Calu3 (cell line): ENCODE measurements at regions of chr1 and their contacts with region 1.

Region 1: DNA sequence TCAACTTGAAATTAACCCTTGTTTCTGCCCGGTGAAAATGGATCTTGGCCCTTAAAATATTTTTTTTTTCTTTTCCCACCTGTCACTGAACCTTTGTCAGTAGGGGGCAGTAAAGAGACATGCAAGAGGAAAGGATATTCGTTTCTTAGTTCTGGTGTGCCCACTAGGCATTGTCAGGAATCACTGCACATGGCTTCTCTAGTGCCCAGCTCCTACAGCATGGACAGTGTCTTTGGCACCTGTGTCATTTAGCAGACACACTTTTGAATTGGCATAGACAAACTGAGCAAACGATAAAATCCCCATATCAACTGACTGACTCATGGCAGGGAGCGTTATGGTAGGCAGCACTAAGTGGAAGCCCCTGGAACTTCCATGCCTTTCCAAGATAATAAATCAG is 1048.1 kb downstream of the BRINP3 start:
- DNase-seq: peak; percentile 54
- H3K4me3 Mint-ChIP-seq: no peak overlapping the region
- H3K27ac Mint-ChIP-seq: no peak overlapping the region
- H3K4me1 Mint-ChIP-seq: peaks cover 13% of the 10 kb centered on the region
- H3K27me3 Mint-ChIP-seq: no peaks in the 10 kb centered on the region
- CTCF ChIP-seq: peak; percentile 86

Region 2: DNA sequence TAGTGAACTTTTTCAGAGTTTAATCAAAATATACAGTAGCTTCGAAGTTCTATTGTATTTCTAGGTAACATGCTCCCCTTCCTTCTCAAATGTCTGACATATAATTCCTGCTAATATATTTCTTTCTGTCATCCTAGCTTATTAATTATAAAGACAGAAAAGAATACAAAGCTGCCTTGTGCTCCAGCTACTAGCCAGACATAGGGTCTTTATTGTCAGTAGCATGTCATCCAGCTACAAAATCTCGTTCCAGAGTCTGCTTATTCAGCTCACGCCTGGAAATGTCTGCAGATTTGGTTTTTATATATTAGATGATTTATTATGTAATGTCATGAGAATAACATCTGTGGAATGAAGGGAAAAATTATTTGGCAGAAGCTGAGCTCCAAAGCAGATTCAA is 54.8 kb before region 1 on chr1:
- CTCF ChIA-PET with region 1: no interaction called
- intact Hi-C with region 1: no loop called
- DNase-seq: no peak
- H3K4me3 Mint-ChIP-seq: no peak overlapping the region
- H3K27ac Mint-ChIP-seq: no peak overlapping the region
- H3K4me1 Mint-ChIP-seq: no peaks in the 10 kb centered on the region
- H3K27me3 Mint-ChIP-seq: no peaks in the 10 kb centered on the region
- CTCF ChIP-seq: no peak

Region 3: GRCh38 chr1:189606795-189607476 is 177.3 kb after region 1 on chr1:
- CTCF ChIA-PET with region 1: no interaction called
- intact Hi-C with region 1: loop called (anchors 5 kb)
- DNase-seq: no peak
- H3K4me3 Mint-ChIP-seq: peak overlapping the region; percentile 30
- H3K27ac Mint-ChIP-seq: peak overlapping the region; percentile 33
- H3K4me1 Mint-ChIP-seq: peaks cover 41% of the 10 kb centered on the region
- H3K27me3 Mint-ChIP-seq: no peaks in the 10 kb centered on the region
- CTCF ChIP-seq: no peak

Region 4: GRCh38 chr1:189673218-189673617 is 243.6 kb after region 1 on chr1:
- CTCF ChIA-PET with region 1: no interaction called
- intact Hi-C with region 1: loop called (anchors 2 kb)
- DNase-seq: no peak
- H3K4me3 Mint-ChIP-seq: no peak overlapping the region
- H3K27ac Mint-ChIP-seq: no peak overlapping the region
- H3K4me1 Mint-ChIP-seq: no peaks in the 10 kb centered on the region
- H3K27me3 Mint-ChIP-seq: no peaks in the 10 kb centered on the region
- CTCF ChIP-seq: no peak

Region 5: DNA sequence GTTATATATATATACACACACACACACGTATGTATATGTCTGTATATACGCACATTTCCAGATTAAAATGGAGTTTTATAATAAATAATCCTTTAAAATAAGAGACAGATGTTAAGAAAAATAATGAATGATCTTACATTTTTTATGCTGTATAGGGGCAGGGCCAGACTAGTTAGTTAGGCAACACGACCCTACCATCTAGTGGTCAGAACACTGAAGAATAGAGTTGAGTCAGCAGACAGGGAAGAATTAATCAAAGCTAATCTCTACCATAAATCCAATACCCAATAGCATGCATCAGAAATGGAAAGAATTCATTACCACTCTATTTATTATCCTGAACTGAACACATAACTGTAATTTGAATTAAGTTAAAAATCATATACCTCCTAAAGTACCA is 891.3 kb after region 1 on chr1:
- CTCF ChIA-PET with region 1: interaction called, 6 read pairs
- intact Hi-C with region 1: loop called (anchors 2 kb)
- DNase-seq: peak; percentile 53
- H3K4me3 Mint-ChIP-seq: no peak overlapping the region
- H3K27ac Mint-ChIP-seq: no peak overlapping the region
- H3K4me1 Mint-ChIP-seq: no peaks in the 10 kb centered on the region
- H3K27me3 Mint-ChIP-seq: no peaks in the 10 kb centered on the region
- CTCF ChIP-seq: peak; percentile 46

Region 6: DNA sequence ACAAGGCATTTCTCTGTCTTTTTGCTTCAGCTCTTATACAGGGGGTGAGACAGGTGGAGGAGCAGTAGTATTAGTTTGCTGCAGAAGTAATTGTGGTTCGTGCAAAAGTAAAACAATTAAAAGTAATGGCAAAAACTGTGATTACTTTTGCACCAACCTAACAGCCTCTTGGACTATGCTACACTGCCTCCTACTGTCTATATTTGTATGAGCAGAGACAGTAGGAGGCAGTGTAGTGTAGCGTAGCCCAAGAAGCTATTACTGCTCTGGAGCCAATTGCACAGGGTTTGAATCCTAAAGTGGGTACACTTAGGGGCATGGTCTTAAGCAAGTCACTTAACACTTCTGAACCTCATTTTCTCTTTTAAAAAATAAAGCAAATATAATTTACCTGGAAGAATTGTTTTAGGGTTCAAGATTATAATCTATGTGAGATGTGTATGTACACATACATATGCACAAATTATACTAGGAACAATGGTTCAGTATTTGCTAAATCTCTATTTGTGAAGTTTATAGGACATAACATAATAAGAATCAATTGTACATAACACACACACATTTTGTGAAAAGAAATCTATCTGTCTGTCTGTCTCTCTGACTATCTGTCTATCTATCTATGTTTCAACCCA is 944.2 kb after region 1 on chr1:
- CTCF ChIA-PET with region 1: no interaction called
- intact Hi-C with region 1: loop called (anchors 2 kb)
- DNase-seq: peak; percentile 8
- H3K4me3 Mint-ChIP-seq: no peak overlapping the region
- H3K27ac Mint-ChIP-seq: no peak overlapping the region
- H3K4me1 Mint-ChIP-seq: peaks cover 4% of the 10 kb centered on the region
- H3K27me3 Mint-ChIP-seq: no peaks in the 10 kb centered on the region
- CTCF ChIP-seq: peak; percentile 58

Region 7: GRCh38 chr1:190436615-190437014 is 1007.0 kb after region 1 on chr1:
- CTCF ChIA-PET with region 1: no interaction called
- intact Hi-C with region 1: loop called (anchors 5 kb)
- DNase-seq: peak; percentile 43
- H3K4me3 Mint-ChIP-seq: no peak overlapping the region
- H3K27ac Mint-ChIP-seq: no peak overlapping the region
- H3K4me1 Mint-ChIP-seq: no peaks in the 10 kb centered on the region
- H3K27me3 Mint-ChIP-seq: no peaks in the 10 kb centered on the region
- CTCF ChIP-seq: peak; percentile 21